SK-N-SH (cell line): ENCODE measurements at regions of chr17 and their contacts with region 1.

Region 1: GRCh38 chr17:73255671-73256181 is 6.0 kb downstream of the CPSF4L start:
- DNase-seq: peak; percentile 91
- H3K4me3 ChIP-seq: no peak overlapping the region
- H3K27ac ChIP-seq: peak overlapping the region in 1 of 2 experiments; percentile 47; a peak in 2 of 4 replicates
- H3K4me1 ChIP-seq: peaks cover 0 to 14% of the 10 kb centered on the region in 2 experiments; a peak in 1 of 4 replicates
- H3K27me3 ChIP-seq: no peaks in the 10 kb centered on the region
- CTCF ChIP-seq: peak; percentile 100
- EP300 ChIP-seq: peak in 1 of 2 experiments; percentile 94; a peak in 2 of 4 replicates
- RAD21 ChIP-seq: peak; percentile 100

Region 2: DNA sequence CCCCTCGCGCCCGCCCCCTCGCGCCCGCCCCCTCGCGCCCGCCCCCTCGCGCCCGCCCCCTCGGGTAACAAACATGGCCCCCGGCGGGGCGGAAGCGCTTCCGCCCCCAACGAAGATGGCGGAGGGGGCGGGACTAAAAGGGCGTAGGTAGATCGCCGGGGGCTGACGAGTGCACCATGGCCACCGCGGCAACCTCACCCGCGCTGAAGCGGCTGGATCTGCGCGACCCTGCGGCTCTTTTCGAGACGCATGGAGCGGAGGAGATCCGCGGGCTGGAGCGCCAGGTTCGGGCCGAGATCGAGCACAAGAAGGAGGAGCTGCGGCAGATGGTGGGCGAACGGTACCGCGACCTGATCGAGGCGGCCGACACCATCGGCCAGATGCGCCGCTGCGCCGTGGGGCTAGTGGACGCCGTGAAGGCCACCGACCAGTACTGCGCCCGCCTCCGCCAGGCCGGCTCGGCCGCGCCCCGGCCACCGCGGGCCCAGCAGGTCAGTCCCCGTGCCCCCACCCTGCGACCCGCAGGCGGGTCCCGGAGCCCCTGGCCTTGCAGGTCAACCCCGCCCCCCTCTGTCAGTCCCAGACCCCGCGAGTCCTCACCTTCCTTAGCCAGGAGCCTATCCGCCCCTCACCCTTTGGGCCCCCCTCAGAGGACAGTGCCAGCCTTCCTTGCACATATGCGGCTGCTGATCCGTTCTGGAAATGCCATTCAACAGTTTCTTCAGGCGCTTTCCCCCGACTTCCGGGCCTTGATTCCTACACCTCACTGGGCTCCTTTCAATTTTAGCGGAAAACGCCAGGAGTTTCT is 62.6 kb before region 1 on chr17 and contains the start of gene COG1:
- CTCF ChIA-PET with region 1: interaction called, 42 read pairs
- POLR2A ChIA-PET with region 1: interaction called, 4 read pairs
- DNase-seq: peak; percentile 100
- H3K4me3 ChIP-seq: peak within 1 kb of the TSS; percentile 73 to 76
- H3K27ac ChIP-seq: peak within 1 kb of the TSS; percentile 85 to 95
- H3K4me1 ChIP-seq: peaks cover 5 to 8% of the 10 kb centered on the region in 2 experiments; a peak in 2 of 4 replicates
- H3K27me3 ChIP-seq: no peaks in the 10 kb centered on the region
- CTCF ChIP-seq: no peak
- EP300 ChIP-seq: no peak
- RAD21 ChIP-seq: no peak
- polyA plus RNA-seq, gene COG1: 52.8 and 53.1 TPM in 2 replicates

Region 3: DNA sequence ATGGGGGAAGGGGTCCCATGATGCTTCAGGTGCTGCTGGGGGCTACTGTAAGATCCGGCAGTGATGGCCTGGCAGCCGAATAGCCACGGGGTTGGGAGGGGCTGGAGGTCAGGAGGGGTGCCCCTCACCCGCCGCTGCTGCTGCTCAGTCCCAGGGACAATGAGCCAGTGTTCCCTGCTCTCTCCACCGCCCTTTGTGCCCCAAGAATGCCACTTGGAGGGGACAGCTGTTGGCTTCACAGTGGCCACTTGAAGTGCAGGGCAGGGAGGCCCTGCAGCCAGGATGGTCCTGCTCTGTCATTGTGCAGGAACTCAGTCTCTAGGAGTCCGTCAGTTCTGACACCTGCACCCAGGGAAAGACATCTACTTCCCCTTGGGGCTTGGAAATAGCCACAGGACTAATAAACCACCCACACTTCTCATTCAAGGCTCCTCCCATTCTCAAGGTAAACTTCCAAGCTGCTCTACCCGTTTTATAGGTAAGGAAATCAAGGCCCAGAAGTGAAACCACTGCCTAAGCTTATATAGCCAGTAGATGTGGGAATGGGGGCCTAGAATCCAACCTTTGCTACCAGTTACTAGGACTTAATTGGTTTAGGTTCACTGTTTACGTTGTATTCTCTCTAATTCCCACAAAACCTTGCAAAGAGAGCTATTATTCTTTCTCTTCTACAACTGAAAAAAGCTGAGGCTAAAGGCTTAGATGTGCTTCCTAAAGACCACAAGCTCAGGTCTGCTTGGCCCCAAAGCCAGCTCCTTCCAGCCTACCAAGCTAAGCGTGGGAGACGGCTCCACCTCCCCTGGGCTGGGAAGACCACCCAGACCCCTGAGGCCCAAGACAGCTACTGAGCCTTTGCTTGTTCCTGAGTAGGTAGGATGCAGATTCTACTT is 12.2 kb after region 1 on chr17:
- CTCF ChIA-PET with region 1: interaction called, 33 read pairs
- POLR2A ChIA-PET with region 1: no interaction called
- DNase-seq: no peak
- H3K4me3 ChIP-seq: no peak overlapping the region
- H3K27ac ChIP-seq: no peak overlapping the region
- H3K4me1 ChIP-seq: peaks cover 0 to 4% of the 10 kb centered on the region in 2 experiments; a peak in 1 of 4 replicates
- H3K27me3 ChIP-seq: no peaks in the 10 kb centered on the region
- CTCF ChIP-seq: no peak
- EP300 ChIP-seq: no peak
- RAD21 ChIP-seq: no peak

Region 4: GRCh38 chr17:73297934-73298861 is 42.5 kb after region 1 on chr17:
- CTCF ChIA-PET with region 1: interaction called, 16 read pairs
- POLR2A ChIA-PET with region 1: no interaction called
- DNase-seq: peak; percentile 73
- H3K4me3 ChIP-seq: no peak overlapping the region
- H3K27ac ChIP-seq: peak overlapping the region; percentile 11 to 51; a peak in 3 of 4 replicates
- H3K4me1 ChIP-seq: peaks cover 42 to 46% of the 10 kb centered on the region in 2 experiments
- H3K27me3 ChIP-seq: no peaks in the 10 kb centered on the region
- CTCF ChIP-seq: no peak
- EP300 ChIP-seq: peak in 1 of 2 experiments; percentile 36; a peak in 1 of 4 replicates
- RAD21 ChIP-seq: 0 out of 2 replicates have a peak, but pooled peaks have one; percentile 3

Region 5: DNA sequence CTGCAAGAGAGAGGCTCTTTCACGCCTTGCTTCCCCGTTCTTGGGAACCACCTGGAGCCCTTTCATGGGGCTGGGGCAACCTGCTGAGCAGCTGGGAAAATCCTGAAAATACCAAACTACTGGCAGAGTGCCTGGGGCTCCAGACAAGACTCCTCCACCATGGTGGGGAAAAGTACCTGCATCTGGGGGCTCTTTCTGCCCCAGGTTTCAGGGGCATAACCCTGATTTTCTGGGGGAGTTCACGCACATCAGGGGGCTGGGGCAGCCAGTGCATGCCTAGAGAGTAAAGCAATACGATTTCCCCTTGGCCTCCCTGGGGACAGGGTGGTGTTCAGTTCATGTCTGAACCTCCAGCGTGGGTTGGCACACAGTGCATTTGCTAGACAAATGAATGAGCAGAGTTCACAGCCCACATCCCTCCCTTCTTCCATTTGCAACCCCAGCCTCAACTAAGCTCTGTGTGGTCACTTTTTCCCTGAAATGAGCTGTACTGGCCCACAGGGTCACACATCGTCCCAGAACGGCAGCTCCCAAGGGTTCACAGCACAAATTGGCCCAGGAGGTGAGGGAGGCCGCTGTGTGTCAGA is 61.3 kb after region 1 on chr17:
- CTCF ChIA-PET with region 1: interaction called, 66 read pairs
- POLR2A ChIA-PET with region 1: no interaction called
- DNase-seq: no peak
- H3K4me3 ChIP-seq: no peak overlapping the region
- H3K27ac ChIP-seq: peak overlapping the region in 1 of 2 experiments; percentile 48; a peak in 2 of 4 replicates
- H3K4me1 ChIP-seq: peaks cover 6 to 40% of the 10 kb centered on the region in 2 experiments; a peak in 3 of 4 replicates
- H3K27me3 ChIP-seq: no peaks in the 10 kb centered on the region
- CTCF ChIP-seq: no peak
- EP300 ChIP-seq: no peak
- RAD21 ChIP-seq: no peak

Region 6: GRCh38 chr17:73359987-73360410 is 104.3 kb after region 1 on chr17:
- CTCF ChIA-PET with region 1: interaction called, 691 read pairs
- POLR2A ChIA-PET with region 1: no interaction called
- DNase-seq: peak; percentile 63
- H3K4me3 ChIP-seq: no peak overlapping the region
- H3K27ac ChIP-seq: no peak overlapping the region
- H3K4me1 ChIP-seq: peaks cover 0 to 59% of the 10 kb centered on the region in 2 experiments; a peak in 1 of 4 replicates
- H3K27me3 ChIP-seq: 0 out of 2 replicates have a peak, but pooled peaks cover 7% of the 10 kb centered on the region
- CTCF ChIP-seq: no peak
- EP300 ChIP-seq: no peak
- RAD21 ChIP-seq: no peak

Region 7: GRCh38 chr17:73410586-73411312 is 155.0 kb after region 1 on chr17:
- CTCF ChIA-PET with region 1: interaction called, 11 read pairs
- POLR2A ChIA-PET with region 1: no interaction called
- DNase-seq: no peak
- H3K4me3 ChIP-seq: no peak overlapping the region
- H3K27ac ChIP-seq: no peak overlapping the region
- H3K4me1 ChIP-seq: no peaks in the 10 kb centered on the region
- H3K27me3 ChIP-seq: no peaks in the 10 kb centered on the region
- CTCF ChIP-seq: no peak
- EP300 ChIP-seq: no peak
- RAD21 ChIP-seq: no peak